Activated naive CD4-positive, alpha-beta T cell treated with anti-CD3 and anti-CD28 coated beads for 36 hours (primary cell): ENCODE measurements at regions of chr14 and their contacts with region 1.

Region 1: DNA sequence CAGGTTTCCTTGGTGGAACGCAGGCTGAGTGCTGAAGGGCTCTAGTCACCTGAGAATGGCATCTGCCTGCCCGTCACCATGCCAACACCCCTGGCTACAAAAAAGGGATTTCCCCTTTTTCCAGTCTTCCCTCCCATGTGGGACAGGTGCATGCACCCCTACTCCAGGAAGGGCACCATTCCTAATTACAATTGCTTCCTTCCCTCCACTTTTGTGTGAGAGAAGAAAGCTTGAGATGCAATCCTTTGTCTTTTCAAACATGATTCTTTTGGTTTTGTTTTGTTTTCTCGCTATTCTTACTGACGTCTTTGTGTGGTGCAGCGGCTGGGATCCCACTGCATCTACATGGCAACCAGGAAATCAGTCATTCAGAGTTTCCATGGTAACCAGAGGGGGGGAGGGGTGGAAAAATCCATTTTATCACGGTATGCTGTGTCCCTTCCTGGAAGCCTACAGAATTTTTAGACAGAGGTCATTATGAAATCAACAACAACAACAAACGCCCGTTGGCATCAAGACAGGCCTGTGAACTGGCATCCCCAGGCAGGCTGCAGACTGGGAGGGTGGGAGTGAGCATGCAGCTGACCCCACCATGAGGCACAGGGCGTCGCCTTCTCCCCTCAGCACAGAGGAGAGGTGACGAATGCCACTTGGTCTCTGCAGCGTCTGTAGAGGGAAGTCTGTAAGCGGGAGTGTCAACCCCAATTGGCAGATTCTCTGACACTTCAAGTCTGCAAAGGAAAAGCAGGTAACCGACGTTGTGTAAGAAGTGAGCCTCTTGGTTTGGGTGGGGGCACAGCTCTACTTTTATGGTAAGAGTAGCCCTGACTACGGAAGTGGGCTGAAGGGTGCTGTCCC is 13.6 kb upstream of the GNG2 start:
- DNase-seq: peak; percentile 93
- H3K4me3 Mint-ChIP-seq: peak overlapping the region; percentile 85
- H3K27ac Mint-ChIP-seq: peak overlapping the region; percentile 100
- H3K4me1 Mint-ChIP-seq: peaks cover 72% of the 10 kb centered on the region
- H3K27me3 Mint-ChIP-seq: no peaks in the 10 kb centered on the region

Region 2: DNA sequence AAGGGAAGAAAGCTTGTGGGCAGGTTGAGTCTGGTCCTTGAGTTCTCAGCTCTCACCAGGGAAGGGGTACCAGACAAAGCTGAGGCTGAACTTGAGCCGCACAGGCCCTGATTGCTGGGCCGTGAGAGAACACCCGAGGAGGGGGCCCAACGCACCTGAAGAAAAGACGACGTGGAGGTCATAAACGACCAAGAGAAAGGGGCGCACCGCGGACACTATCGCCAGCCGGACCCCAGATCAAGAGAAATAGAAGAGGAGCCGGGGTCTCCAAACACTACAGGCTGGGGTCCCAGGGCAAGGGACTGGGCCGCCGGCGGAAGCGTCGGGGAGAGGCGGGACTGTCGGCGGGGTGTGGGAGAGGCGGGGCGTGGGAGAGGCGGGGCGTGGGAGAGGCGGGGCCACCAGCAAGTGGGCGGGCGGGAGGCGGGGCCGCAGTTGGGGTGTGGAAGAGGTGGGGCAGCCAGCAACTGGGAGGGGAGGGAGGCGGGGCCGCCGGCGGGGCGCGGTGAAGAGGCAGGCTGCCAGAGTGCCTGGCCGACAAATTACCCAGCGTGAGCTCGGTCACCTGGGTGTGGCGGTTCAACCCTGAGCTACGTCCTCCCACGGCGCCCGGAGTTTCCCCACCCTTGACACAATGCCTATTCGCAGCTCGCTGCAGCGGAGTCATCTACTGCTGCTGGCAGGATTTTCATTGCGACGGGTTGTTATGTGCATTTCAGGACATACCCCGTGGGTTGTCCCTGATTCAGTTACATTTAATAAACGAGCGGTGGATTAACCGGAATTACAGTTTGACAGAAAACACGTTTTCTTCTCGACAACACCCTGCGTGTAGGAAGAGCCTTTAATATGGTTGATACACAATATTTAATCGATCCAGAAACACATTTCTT is 1978.8 kb before region 1 on chr14:
- CTCF ChIA-PET with region 1: no interaction called
- intact Hi-C with region 1: loop called (anchors 10 kb)
- DNase-seq: peak; percentile 99
- H3K4me3 Mint-ChIP-seq: peak overlapping the region; percentile 92
- H3K27ac Mint-ChIP-seq: peak overlapping the region; percentile 94
- H3K4me1 Mint-ChIP-seq: peaks cover 20% of the 10 kb centered on the region
- H3K27me3 Mint-ChIP-seq: no peaks in the 10 kb centered on the region

Region 3: DNA sequence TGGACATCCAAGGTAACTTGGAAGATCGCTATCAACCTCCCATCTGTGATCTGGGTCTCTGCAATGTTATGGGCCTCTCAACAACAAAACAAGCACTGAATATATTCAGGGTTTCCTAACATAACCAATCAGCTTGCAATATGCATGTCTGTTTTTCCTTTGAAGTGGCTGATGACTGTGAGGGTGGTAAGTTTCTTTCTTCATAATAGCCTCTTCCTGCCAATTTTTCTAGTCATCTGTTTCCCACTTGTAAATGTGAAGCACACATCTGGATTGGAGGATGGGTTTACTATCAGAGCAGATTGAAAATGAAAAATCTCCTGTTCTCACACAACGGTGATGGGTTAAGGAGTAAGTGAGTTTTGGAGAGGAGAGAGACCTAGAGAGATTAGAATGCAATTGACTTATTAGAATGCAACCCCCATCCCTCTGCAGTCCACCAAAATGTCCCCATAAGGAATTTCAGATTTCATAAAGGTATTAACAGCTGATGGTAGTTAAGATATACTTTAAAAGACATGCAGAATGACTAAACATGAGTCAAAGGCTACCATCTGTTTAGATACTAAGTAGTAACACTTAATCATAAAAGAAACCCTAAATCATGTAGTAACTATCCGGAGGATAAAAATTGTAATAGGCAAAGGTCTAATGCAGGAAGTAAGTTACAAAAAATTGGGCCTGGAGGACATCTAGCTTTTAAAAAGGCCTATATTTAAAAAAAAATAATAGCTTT is 1120.3 kb before region 1 on chr14:
- CTCF ChIA-PET with region 1: no interaction called
- intact Hi-C with region 1: loop called (anchors 1 kb)
- DNase-seq: peak; percentile 48
- H3K4me3 Mint-ChIP-seq: peak overlapping the region; percentile 3
- H3K27ac Mint-ChIP-seq: peak overlapping the region; percentile 83
- H3K4me1 Mint-ChIP-seq: peaks cover 28% of the 10 kb centered on the region
- H3K27me3 Mint-ChIP-seq: no peaks in the 10 kb centered on the region

Region 4: DNA sequence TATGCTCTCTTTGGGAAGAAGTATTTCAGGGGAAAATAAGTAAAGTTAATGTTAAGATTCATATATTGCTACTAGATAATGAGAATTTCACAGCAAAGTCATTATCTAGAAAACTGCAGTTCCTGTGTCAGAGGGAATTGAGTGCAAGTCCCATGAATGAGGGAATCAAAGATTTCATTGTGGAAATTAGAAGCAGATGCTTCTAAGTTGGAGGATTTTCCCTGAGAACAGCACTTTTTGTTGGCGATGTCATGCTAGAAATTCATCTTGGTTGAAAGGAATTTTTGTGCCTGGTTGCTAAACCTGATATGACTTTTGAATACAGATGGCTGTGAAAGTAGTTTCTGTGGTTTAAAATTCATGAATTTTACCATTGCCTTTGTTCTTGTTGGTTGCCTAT is 169.6 kb before region 1 on chr14:
- CTCF ChIA-PET with region 1: no interaction called
- intact Hi-C with region 1: loop called (anchors 1 kb)
- DNase-seq: no peak
- H3K4me3 Mint-ChIP-seq: no peak overlapping the region
- H3K27ac Mint-ChIP-seq: no peak overlapping the region
- H3K4me1 Mint-ChIP-seq: peaks cover 21% of the 10 kb centered on the region
- H3K27me3 Mint-ChIP-seq: peaks cover 8% of the 10 kb centered on the region

Region 5: GRCh38 chr14:51865953-51866747 is 19.3 kb after region 1 on chr14:
- CTCF ChIA-PET with region 1: interaction called, 9 read pairs
- intact Hi-C with region 1: loop called (anchors 1 kb)
- DNase-seq: no peak
- H3K4me3 Mint-ChIP-seq: no peak overlapping the region
- H3K27ac Mint-ChIP-seq: no peak overlapping the region
- H3K4me1 Mint-ChIP-seq: peaks cover 27% of the 10 kb centered on the region
- H3K27me3 Mint-ChIP-seq: no peaks in the 10 kb centered on the region

Region 6: GRCh38 chr14:51979088-51979709 is 132.3 kb after region 1 on chr14:
- CTCF ChIA-PET with region 1: interaction called, 6 read pairs
- intact Hi-C with region 1: loop called (anchors 1 kb)
- DNase-seq: peak; percentile 91
- H3K4me3 Mint-ChIP-seq: no peak overlapping the region
- H3K27ac Mint-ChIP-seq: no peak overlapping the region
- H3K4me1 Mint-ChIP-seq: peaks cover 4% of the 10 kb centered on the region
- H3K27me3 Mint-ChIP-seq: no peaks in the 10 kb centered on the region

Region 7: GRCh38 chr14:52729925-52730667 is 883.2 kb after region 1 on chr14 and contains the start of gene STYX:
- CTCF ChIA-PET with region 1: no interaction called
- intact Hi-C with region 1: loop called (anchors 5 kb)
- DNase-seq: peak; percentile 98
- H3K4me3 Mint-ChIP-seq: peak within 1 kb of the TSS; percentile 84
- H3K27ac Mint-ChIP-seq: peak within 1 kb of the TSS; percentile 86
- H3K4me1 Mint-ChIP-seq: peaks cover 38% of the 10 kb centered on the region
- H3K27me3 Mint-ChIP-seq: no peaks in the 10 kb centered on the region
- total RNA-seq, gene STYX: 13.3 to 14.1 TPM